OCI-LY7 (cell line): ENCODE measurements at regions of chr2 and their contacts with region 1.

Region 1: DNA sequence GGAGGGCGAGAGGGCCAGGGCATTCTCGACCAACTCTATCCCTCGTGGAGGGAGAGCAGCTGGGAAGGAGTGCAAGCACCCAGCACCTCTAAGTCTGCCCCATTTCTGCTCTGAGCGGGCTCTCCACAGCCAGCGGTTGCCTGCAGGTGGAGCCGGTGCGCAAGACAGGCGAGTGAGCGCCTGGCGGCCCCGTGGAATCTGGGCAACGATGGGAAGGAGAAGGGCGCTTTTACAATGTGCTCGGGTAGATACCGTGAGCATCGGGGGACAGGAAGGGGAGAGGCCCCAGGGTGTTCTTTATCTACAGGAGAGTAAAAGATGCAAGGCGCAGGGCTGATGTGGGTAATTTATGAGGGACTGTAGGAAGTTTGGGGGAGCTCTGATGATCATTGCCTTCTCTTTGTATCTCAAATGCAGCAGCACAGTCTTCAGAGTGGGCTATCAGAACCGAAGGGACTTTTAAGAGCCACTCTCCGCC is 867 bp upstream of the TTL start:
- DNase-seq: peak; percentile 87
- H3K4me3 ChIP-seq: peak overlapping the region; percentile 84
- H3K27ac ChIP-seq: peak overlapping the region; percentile 89
- H3K4me1 ChIP-seq: peaks cover 19% of the 10 kb centered on the region
- CTCF ChIP-seq: peak; percentile 81

Region 2: DNA sequence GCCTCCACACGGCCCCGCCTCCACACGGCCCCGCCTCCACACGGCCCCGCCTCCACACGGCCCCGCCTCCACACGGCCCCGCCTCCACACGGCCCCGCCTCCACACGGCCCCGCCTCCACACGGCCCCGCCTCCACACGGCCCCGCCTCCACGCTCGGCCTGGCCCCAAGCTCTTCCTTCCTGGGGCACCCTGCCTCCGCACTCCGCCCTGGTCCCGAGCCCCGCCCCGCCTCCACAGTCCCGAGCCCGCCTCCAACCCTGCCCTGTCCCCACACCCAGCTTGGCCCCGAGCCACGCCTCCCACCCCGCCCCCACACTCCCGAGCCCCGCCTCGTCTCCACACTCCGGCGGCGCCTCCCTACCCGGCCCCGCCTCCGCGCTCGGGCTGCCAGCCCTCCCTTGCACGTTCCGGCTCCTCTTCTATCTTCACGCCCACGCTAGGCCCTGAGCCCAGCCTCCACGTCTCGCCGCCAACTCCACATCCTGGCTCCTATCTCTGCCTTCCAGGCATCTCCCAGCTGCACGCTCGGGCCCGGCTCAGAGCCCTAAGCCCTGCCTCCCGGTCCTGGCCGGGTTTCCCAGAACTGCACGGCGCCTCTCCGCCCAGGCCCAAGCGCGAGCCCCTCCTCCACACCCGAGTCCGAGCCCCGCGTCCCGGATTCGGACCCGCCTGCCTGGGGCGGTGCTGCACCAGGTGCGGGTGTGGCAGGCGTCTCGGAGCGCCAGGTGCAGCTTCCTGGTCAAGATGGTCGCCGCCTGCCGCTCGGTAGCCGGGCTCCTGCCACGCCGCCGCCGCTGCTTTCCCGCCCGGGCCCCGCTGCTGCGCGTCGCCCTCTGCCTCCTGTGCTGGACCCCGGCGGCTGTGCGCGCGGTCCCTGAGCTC is 426.0 kb before region 1 on chr2 and contains the start of gene TMEM87B:
- CTCF ChIA-PET with region 1: no interaction called
- POLR2A ChIA-PET with region 1: no interaction called
- intact Hi-C with region 1: loop called (anchors 1 kb)
- DNase-seq: peak; percentile 94
- H3K4me3 ChIP-seq: peak within 1 kb of the TSS; percentile 82
- H3K27ac ChIP-seq: peak within 1 kb of the TSS; percentile 77
- H3K4me1 ChIP-seq: peaks cover 35% of the 10 kb centered on the region
- CTCF ChIP-seq: no peak
- total RNA-seq, gene TMEM87B: 9.1 and 13.9 TPM in 2 replicates

Region 3: GRCh38 chr2:112275306-112275886 is 205.7 kb before region 1 on chr2 and contains the start of gene ZC3H6:
- CTCF ChIA-PET with region 1: no interaction called
- POLR2A ChIA-PET with region 1: no interaction called
- intact Hi-C with region 1: loop called (anchors 1 kb)
- DNase-seq: peak; percentile 98
- H3K4me3 ChIP-seq: peak within 1 kb of the TSS; percentile 97
- H3K27ac ChIP-seq: peak within 1 kb of the TSS; percentile 97
- H3K4me1 ChIP-seq: peaks cover 12% of the 10 kb centered on the region
- CTCF ChIP-seq: no peak
- total RNA-seq, gene ZC3H6: 4.3 and 5.4 TPM in 2 replicates

Region 4: GRCh38 chr2:112584134-112584890 is 103.2 kb after region 1 on chr2 and contains the start of gene CHCHD5:
- CTCF ChIA-PET with region 1: interaction called, 3 read pairs
- POLR2A ChIA-PET with region 1: no interaction called
- intact Hi-C with region 1: loop called (anchors 1 kb)
- DNase-seq: peak; percentile 95
- H3K4me3 ChIP-seq: peak within 1 kb of the TSS; percentile 75
- H3K27ac ChIP-seq: peak within 1 kb of the TSS; percentile 76
- H3K4me1 ChIP-seq: peaks cover 27% of the 10 kb centered on the region
- CTCF ChIP-seq: no peak
- total RNA-seq, gene CHCHD5: 22.3 and 22.5 TPM in 2 replicates

Region 5: GRCh38 chr2:112726497-112727190 is 245.6 kb after region 1 on chr2:
- CTCF ChIA-PET with region 1: no interaction called
- POLR2A ChIA-PET with region 1: no interaction called
- intact Hi-C with region 1: loop called (anchors 5 kb)
- DNase-seq: peak; percentile 87
- H3K4me3 ChIP-seq: no peak overlapping the region
- H3K27ac ChIP-seq: no peak overlapping the region
- H3K4me1 ChIP-seq: peaks cover 5% of the 10 kb centered on the region
- CTCF ChIP-seq: peak; percentile 94